Activated CD4-positive, alpha-beta T cell treated with anti-CD3 and anti-CD28 coated beads, Interleukin-2, amount 10 ng/mL, durations not matched to agents 24 days and 14 days (primary cell): ENCODE measurements at regions of chr15 and their contacts with region 1.

Region 1: DNA sequence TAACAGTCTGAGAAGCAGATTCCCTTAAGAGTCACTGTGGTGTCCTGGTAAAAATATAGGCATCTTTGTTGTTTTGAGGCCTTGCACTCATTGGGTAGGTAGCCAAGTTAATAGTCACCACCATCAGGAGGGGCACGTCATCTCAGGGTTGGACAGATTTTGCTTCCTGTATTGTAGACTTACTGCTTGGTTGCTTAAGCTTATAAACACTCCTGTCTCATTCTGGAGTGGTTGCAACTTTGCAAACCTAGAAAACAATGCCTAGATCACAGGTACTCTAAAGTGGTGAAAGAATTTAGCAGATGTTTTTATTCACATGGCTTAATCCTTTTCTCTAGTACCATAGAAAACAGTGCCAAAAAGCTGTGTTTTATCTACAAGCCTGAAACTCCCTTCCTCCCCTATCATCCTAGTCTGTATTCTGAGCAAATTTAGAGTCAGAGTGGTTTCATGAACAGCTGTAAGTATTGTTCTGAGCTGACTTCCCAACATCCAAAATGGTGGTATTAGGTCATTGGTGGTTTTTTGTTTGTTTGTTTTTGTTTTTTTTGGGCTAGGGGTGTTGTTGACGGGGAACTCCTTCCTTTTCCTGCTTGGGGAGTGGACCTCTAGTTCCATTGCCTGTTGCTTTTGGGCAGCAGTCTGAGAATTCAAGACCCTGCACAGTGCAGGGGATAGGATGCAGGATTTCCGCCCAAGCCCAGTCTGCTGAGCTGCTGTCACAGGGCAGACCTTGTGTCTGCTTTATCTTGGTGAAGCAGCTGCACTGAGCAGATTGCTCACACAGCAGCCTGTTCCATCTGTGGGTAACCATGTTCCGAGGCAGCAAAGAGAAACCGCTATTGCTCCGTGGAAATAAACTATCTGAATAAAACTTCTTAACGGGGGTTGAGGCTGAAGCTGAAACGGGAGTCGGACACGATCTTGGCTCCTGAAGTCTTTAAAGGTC is 202.0 kb downstream of the AKAP13 start:
- DNase-seq: peak; percentile 91
- H3K4me3 Mint-ChIP-seq: peak overlapping the region; percentile 82
- H3K27ac Mint-ChIP-seq: peak overlapping the region; percentile 98
- H3K4me1 Mint-ChIP-seq: peaks cover 68% of the 10 kb centered on the region
- H3K27me3 Mint-ChIP-seq: no peaks in the 10 kb centered on the region

Region 2: DNA sequence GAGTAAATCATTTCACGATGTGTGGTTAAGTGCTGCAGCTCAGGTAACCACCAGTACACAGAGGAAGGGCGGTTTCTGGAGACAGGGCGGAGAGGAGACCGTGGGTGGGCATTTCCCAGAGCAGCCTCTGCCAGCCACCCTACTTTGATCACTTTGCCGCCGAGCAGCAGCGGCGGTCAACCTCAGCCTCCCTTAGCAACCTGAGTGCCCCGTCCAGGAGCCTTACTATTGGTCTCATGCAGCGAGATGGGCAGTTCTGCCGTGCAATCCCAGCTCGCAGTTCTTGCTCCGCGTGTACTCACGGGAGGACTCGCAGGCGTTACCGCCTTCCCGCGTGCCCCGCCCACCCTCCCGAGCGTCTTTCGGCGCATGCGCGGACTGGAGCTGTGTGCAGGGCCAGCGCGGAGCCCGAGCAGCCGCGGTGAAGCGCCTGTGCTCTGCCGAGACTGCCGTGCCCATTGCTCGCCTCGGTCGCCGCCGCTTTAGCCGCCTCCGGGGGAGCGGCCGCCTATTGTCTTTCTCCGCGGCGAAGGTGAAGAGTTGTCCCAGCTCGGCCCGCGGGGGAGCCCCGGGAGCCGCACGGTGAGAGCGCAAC is 202.1 kb before region 1 on chr15 and contains the start of gene AKAP13:
- intact Hi-C with region 1: loop called (anchors 5 kb)
- DNase-seq: peak; percentile 98
- H3K4me3 Mint-ChIP-seq: peak within 1 kb of the TSS; percentile 88
- H3K27ac Mint-ChIP-seq: peak within 1 kb of the TSS; percentile 93
- H3K4me1 Mint-ChIP-seq: peaks cover 51% of the 10 kb centered on the region
- H3K27me3 Mint-ChIP-seq: peaks cover 3% of the 10 kb centered on the region
- total RNA-seq, gene AKAP13: 68.5 and 71.3 TPM in 2 replicates

Region 3: GRCh38 chr15:85485956-85486567 is 96.3 kb before region 1 on chr15:
- intact Hi-C with region 1: loop called (anchors 5 kb)
- DNase-seq: peak; percentile 92
- H3K4me3 Mint-ChIP-seq: no peak overlapping the region
- H3K27ac Mint-ChIP-seq: no peak overlapping the region
- H3K4me1 Mint-ChIP-seq: peaks cover 41% of the 10 kb centered on the region
- H3K27me3 Mint-ChIP-seq: no peaks in the 10 kb centered on the region

Region 4: GRCh38 chr15:85555875-85556617 is 26.4 kb before region 1 on chr15:
- intact Hi-C with region 1: loop called (anchors 2 kb)
- DNase-seq: no peak
- H3K4me3 Mint-ChIP-seq: no peak overlapping the region
- H3K27ac Mint-ChIP-seq: peak overlapping the region; percentile 2
- H3K4me1 Mint-ChIP-seq: peaks cover 41% of the 10 kb centered on the region
- H3K27me3 Mint-ChIP-seq: no peaks in the 10 kb centered on the region

Region 5: DNA sequence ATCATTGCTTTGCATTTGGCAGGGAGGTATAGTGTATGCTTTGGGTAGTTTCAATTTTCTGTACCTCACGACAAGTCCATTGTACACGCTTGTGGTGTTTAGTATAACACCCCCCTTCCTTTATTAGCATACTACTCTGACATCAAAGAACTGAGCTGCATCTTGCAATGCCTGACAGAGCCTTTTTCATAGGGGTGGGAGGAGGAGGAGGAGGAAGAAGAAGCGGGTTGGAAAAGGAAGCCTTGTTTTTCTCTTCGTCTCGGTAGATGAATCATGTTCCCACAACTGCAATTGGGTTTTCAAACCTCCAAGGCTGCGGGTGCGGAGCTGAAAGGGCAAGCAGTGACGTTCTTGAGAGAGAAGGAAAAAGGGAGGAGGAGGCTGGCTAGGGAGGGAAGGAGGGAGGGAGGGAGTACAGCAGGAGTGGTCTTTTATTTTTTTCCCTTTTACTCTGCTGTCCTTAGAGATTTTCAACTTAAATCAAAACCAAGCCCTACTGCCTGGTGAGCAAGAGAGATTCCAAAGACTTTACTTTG is 36.6 kb after region 1 on chr15:
- intact Hi-C with region 1: loop called (anchors 1 kb)
- DNase-seq: peak; percentile 83
- H3K4me3 Mint-ChIP-seq: no peak overlapping the region
- H3K27ac Mint-ChIP-seq: no peak overlapping the region
- H3K4me1 Mint-ChIP-seq: peaks cover 31% of the 10 kb centered on the region
- H3K27me3 Mint-ChIP-seq: no peaks in the 10 kb centered on the region

Region 6: DNA sequence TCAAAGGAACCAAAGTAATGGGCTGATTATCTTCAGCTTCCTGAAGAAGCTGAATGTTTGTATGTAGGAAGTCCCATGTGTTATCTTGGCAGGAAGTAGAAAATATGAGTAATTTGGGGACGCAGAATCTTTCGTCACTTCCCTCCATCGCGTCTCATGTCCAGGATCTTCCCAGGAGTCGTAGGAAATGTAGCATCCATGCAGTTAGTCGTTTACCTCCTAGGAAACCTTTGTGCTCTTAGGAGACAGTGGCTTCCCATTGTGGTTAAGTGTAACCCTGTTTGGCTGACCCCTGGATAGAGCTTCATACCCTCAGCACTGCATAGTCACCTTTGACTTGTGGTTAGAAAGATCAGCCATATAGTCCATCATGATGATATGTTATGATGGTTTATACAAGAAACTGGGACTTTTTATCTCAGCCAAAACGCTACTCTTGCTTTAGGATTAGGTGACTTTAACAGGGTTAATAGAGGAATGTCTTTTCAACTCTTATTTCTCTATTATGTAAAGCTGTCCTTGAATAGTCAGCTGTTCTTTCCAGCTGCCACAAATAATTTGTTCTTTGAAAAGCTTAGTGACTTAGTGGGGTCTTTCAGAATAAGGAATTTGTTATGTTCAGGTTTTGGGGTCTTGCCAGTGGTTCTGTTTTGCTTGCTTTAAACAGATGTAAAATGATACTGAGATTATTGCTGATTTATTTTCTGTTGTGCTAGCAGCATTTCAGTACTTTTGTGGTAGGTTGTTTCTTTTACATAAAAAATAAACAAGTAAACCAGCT is 120.1 kb after region 1 on chr15:
- intact Hi-C with region 1: loop called (anchors 1 kb)
- DNase-seq: peak; percentile 82
- H3K4me3 Mint-ChIP-seq: peak overlapping the region; percentile 76
- H3K27ac Mint-ChIP-seq: peak overlapping the region; percentile 94
- H3K4me1 Mint-ChIP-seq: peaks cover 56% of the 10 kb centered on the region
- H3K27me3 Mint-ChIP-seq: no peaks in the 10 kb centered on the region

Region 7: DNA sequence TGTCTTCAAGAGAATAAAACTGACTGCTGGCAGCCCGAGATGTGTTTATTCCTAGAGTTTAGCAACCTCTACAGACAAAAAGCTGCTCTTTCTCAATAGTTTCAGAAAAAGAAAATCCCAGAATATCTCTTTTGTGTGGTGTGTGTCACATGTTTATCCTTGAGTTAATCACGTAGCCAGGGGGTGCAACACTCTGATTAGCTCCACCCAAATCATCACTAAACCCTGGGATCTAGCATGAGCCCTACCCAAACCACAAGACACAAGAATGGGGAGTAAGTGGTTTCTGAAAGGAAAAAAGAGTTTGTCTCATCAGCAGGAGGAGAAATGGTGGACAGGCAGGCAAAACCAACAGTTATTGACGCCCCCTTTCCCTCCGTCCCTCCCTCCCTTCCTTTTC is 418.8 kb after region 1 on chr15:
- intact Hi-C with region 1: no loop called
- DNase-seq: no peak
- H3K4me3 Mint-ChIP-seq: no peak overlapping the region
- H3K27ac Mint-ChIP-seq: no peak overlapping the region
- H3K4me1 Mint-ChIP-seq: no peaks in the 10 kb centered on the region
- H3K27me3 Mint-ChIP-seq: peaks cover 2% of the 10 kb centered on the region